Activated CD4-positive, alpha-beta T cell treated with anti-CD3 and anti-CD28 coated beads for 36 hours (primary cell): ENCODE measurements at regions of chr18 and their contacts with region 1.

Region 1: GRCh38 chr18:50297621-50298442 is 10.3 kb upstream of the CXXC1 start:
- DNase-seq: peak; percentile 87
- ATAC-seq: peak; percentile 99
- H3K4me3 Mint-ChIP-seq: peak overlapping the region; percentile 65
- H3K27ac Mint-ChIP-seq: peak overlapping the region; percentile 8
- H3K4me1 Mint-ChIP-seq: peaks cover 6% of the 10 kb centered on the region
- H3K27me3 Mint-ChIP-seq: peaks cover 25% of the 10 kb centered on the region

Region 2: DNA sequence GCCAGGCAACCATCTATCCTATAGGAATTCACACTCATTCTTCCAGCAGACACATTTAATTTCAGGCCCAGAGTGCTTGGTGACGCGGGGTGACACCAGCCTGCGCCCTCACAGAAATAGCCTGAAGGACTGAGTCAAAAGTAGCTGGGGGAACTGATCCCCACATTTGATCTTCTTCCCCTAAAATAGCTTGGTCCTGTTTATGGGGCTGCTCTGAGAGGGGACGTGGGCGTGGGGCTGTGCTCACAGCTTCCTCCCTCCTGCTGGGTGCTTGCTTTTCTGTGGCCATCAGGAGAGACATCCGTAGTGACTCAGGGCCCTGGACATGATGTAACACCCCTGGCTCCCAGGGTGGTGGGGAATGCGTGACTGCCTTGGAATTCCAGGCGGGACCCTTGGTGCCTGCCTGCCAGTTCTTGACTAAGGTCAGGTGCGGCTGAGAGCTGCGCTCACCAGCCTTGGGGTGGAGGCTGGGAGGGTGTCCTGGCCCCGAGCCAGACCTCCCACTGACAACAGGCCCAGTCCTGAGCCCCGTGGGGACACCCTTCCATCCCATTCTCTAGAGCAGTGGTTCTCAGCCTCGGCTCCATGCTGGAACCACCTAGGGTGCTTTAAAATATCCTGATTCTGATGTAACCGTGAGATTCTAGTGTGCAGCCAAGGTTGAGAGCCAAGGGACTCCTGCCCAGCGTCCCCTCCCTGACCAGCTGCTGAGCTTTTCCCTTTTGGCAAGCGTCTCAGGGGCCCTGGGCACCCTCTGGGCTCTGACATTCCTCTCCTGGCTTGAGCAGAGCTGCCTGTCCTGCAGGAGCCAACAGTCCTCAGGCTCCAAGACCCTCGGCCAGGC is 1299.6 kb before region 1 on chr18:
- CTCF ChIA-PET with region 1: no interaction called
- POLR2A ChIA-PET with region 1: no interaction called
- intact Hi-C with region 1: no loop called
- DNase-seq: no peak
- ATAC-seq: no peak
- H3K4me3 Mint-ChIP-seq: no peak overlapping the region
- H3K27ac Mint-ChIP-seq: no peak overlapping the region
- H3K4me1 Mint-ChIP-seq: peaks cover 17% of the 10 kb centered on the region
- H3K27me3 Mint-ChIP-seq: peaks cover 1% of the 10 kb centered on the region

Region 3: DNA sequence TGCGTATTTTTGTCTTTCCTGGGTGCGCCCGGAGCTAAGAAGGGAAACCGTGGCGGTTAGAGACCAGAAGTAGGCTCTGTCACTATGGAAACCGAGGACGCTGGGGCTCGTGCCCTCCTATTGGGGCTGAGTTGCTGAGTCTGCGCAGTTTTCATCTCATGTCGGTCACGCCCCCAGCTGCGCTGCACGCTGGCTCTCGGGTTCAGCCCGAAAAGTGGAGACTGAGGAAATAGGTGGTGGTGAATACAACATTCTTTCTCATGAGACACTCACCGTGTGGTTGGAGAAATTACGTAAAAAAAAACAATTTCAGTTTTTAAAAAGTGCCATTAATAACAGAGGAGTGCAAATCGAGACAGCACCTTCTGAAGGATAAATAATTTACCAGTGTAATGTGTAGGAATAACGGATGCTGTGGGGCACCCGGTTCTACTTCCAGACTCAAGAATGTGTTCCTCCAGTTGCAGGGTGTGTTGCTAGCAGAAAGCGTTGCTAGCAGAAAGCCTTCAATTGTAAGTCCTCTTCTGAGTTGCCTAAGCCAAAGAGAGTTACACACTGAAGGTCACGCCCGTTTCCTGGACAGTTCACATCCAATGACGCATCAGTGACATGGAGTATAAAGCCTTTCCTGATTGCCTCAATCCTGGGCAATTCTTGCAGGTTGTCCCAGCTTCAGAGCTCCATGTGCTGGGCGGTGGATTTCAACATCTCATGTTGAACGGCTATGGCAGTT is 10.1 kb after region 1 on chr18:
- CTCF ChIA-PET with region 1: interaction called, 7 read pairs
- POLR2A ChIA-PET with region 1: interaction called, 4 read pairs
- intact Hi-C with region 1: loop called in 1 of 2 experiments (anchors 1 kb)
- DNase-seq: peak; percentile 95
- ATAC-seq: peak; percentile 99
- H3K4me3 Mint-ChIP-seq: peak overlapping the region; percentile 73
- H3K27ac Mint-ChIP-seq: peak overlapping the region; percentile 37
- H3K4me1 Mint-ChIP-seq: peaks cover 11% of the 10 kb centered on the region
- H3K27me3 Mint-ChIP-seq: peaks cover 3% of the 10 kb centered on the region